Activated B cell treated with CpG ODN at 0.5 μM for 24 hours (primary cell): ENCODE measurements at regions of chr9 and their contacts with region 1.

Region 1: GRCh38 chr9:8733131-8733954 is 933.8 kb upstream of the DMAC1 start:
- DNase-seq: no peak
- ATAC-seq: no peak
- H3K4me3 Mint-ChIP-seq: no peak overlapping the region
- H3K27ac Mint-ChIP-seq: no peak overlapping the region
- H3K4me1 Mint-ChIP-seq: no peaks in the 10 kb centered on the region
- H3K27me3 Mint-ChIP-seq: no peaks in the 10 kb centered on the region
- CTCF ChIP-seq: no peak

Region 2: DNA sequence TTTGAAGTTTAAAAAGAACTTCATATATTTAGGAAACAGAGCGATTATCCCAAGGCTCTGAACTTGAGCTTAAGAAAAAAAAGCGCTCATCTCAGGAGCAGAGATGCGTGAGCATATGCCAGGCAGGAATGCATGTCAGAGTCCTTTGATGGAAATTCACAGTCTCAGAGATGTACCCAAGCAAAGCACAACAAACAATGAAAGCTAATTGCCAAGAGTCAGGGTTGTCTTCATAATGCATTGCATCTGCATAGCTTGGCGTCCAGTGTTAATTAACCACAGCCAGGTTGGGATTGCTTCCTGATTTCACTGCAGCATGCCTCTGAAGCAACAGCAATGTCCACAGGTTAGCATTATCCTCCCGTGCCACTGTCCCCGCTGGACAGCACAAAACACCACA is 26.8 kb before region 1 on chr9:
- CTCF ChIA-PET with region 1: no interaction called
- POLR2A ChIA-PET with region 1: no interaction called
- intact Hi-C with region 1: no loop called
- DNase-seq: no peak
- ATAC-seq: no peak
- H3K4me3 Mint-ChIP-seq: no peak overlapping the region
- H3K27ac Mint-ChIP-seq: no peak overlapping the region
- H3K4me1 Mint-ChIP-seq: no peaks in the 10 kb centered on the region
- H3K27me3 Mint-ChIP-seq: no peaks in the 10 kb centered on the region
- CTCF ChIP-seq: no peak

Region 3: GRCh38 chr9:8816361-8816760 is 83.0 kb after region 1 on chr9:
- CTCF ChIA-PET with region 1: no interaction called
- POLR2A ChIA-PET with region 1: no interaction called
- intact Hi-C with region 1: loop called (anchors 10 kb)
- DNase-seq: no peak
- ATAC-seq: no peak
- H3K4me3 Mint-ChIP-seq: no peak overlapping the region
- H3K27ac Mint-ChIP-seq: no peak overlapping the region
- H3K4me1 Mint-ChIP-seq: no peaks in the 10 kb centered on the region
- H3K27me3 Mint-ChIP-seq: no peaks in the 10 kb centered on the region
- CTCF ChIP-seq: no peak

Region 4: GRCh38 chr9:9598723-9599122 is 865.4 kb after region 1 on chr9:
- CTCF ChIA-PET with region 1: no interaction called
- POLR2A ChIA-PET with region 1: no interaction called
- intact Hi-C with region 1: no loop called
- DNase-seq: no peak
- ATAC-seq: no peak
- H3K4me3 Mint-ChIP-seq: no peak overlapping the region
- H3K27ac Mint-ChIP-seq: no peak overlapping the region
- H3K4me1 Mint-ChIP-seq: no peaks in the 10 kb centered on the region
- H3K27me3 Mint-ChIP-seq: no peaks in the 10 kb centered on the region
- CTCF ChIP-seq: no peak